Heart left ventricle (tissue), 16 donors: ENCODE measurements at regions of chr1 and their contacts with region 1.

Region 1: GRCh38 chr1:52002038-52002917 is 11.8 kb upstream of the RAB3B start:
- DNase-seq: peak in 2 of 5 donors; percentile 50 to 58
- ATAC-seq: peak; percentile 69 to 94 (median 88)
- H3K4me3 ChIP-seq: no peak overlapping the region
- H3K27ac ChIP-seq: no peak overlapping the region
- H3K4me1 ChIP-seq: no peaks in the 10 kb centered on the region
- H3K27me3 ChIP-seq: peaks cover 0 to 35% (median 5%) of the 10 kb centered on the region in 9 donors
- CTCF ChIP-seq: peak; percentile 69 to 92 (median 87)
- POLR2A ChIP-seq: no peak

Region 2: GRCh38 chr1:51897699-51898031 is 104.6 kb before region 1 on chr1:
- intact Hi-C with region 1: loop called (anchors 1 to 5 kb)
- DNase-seq: no peak
- ATAC-seq: no peak
- H3K4me3 ChIP-seq: no peak overlapping the region
- H3K27ac ChIP-seq: no peak overlapping the region
- H3K4me1 ChIP-seq: no peaks in the 10 kb centered on the region
- H3K27me3 ChIP-seq: peaks cover 0 to 73% (median 18%) of the 10 kb centered on the region in 9 donors
- CTCF ChIP-seq: no peak
- POLR2A ChIP-seq: no peak

Region 3: DNA sequence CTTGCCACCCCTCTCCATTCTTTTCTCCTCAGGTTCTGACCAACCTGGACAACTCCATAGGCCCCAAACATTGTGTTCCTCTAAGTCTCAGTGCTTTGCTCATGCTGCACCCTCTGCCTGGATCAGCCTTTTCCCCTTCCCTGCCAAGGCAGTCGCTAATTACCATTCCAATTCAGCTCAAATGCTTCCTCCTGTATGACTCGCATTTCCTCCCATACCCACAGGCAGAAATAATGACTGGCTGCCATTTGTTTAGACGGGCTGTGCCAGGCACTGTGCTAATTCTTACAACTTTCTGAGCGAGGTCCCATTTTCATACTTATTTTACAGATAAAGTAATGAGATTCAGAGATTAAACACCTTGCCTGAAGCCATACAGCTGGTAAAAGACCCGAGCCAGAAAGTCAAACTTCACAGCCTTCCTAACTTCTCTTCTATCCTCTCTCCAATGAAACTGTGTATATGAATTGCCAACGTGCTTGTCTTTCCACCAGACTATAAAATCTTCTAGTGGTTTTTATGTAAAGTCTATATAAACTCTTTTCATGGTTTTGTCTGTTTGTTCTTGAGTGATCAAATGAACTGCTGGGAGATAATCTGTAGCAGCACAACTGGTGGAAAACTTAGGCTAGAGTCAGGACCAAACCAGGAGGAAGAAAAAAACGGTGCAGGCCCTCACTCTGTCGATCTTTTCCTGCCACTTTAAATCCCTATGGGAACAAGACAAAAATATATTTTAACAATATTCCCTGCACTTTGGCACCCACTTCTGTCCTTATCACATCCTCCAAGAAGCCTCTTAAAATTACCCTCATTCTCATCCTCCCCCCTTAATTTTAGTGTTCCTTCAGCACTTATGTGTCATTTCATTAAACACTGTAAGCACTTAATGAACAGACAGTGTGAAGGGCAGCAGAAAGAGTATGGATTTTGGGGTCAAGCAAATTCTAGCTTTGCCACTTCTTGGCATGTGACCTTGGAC is 45.5 kb before region 1 on chr1:
- intact Hi-C with region 1: no loop called
- DNase-seq: no peak
- ATAC-seq: no peak
- H3K4me3 ChIP-seq: no peak overlapping the region
- H3K27ac ChIP-seq: no peak overlapping the region
- H3K4me1 ChIP-seq: no peaks in the 10 kb centered on the region
- H3K27me3 ChIP-seq: peaks cover 0 to 25% (median 6%) of the 10 kb centered on the region in 9 donors
- CTCF ChIP-seq: no peak
- POLR2A ChIP-seq: no peak

Region 4: DNA sequence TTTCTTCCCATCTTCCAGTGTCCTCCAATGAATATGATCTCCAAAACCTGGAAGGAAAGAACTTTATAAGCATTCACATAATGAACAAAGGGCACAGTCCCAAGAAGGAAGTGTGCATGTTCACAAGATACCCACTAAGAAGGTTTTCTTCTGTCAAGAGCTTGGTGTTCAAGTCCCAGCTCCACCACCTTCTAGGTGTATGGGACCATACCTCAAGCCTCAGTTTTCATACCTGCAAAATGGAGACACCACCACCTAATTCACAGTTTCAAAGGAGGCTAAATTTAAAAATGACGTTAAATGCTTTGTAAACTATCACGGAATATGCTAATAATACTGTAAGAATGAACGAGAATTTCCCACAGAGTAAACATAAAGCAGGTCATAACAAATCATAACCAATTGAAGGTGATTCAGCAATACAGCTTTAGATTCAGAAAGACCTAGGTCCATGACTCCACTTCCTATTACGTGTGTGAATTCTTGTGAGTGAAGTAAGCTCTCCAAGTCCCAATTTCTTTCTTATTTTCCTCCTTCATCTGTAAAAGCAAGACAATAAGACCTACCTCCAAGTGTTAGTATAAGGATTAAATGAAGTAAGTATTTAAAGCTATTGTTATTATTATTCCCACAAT is 39.4 kb after region 1 on chr1:
- intact Hi-C with region 1: no loop called
- DNase-seq: no peak
- ATAC-seq: no peak
- H3K4me3 ChIP-seq: no peak overlapping the region
- H3K27ac ChIP-seq: no peak overlapping the region
- H3K4me1 ChIP-seq: no peaks in the 10 kb centered on the region
- H3K27me3 ChIP-seq: no peaks in the 10 kb centered on the region
- CTCF ChIP-seq: no peak
- POLR2A ChIP-seq: no peak